PC-3 (cell line): ENCODE measurements at regions of chrX and their contacts with region 1.

Region 1: GRCh38 chrX:40735325-40736169 is at the start of gene MED14:
- DNase-seq: peak; percentile 84
- ATAC-seq: peak; percentile 78
- H3K4me3 ChIP-seq: peak within 1 kb of the TSS; percentile 92
- H3K27ac ChIP-seq: peak within 1 kb of the TSS; percentile 91
- H3K4me1 ChIP-seq: peaks cover 25% of the 10 kb centered on the region
- H3K27me3 ChIP-seq: no peaks in the 10 kb centered on the region
- CTCF ChIP-seq: peak; percentile 49; the same call in 1 of the 2 replicates
- total RNA-seq, gene MED14: 29.5 and 44.7 TPM in 2 replicates

Region 2: GRCh38 chrX:40773809-40774208 is 38.3 kb after region 1 on chrX:
- CTCF ChIA-PET with region 1: no interaction called
- POLR2A ChIA-PET with region 1: interaction called, 18 read pairs
- intact Hi-C with region 1: loop called (anchors 1 kb)
- DNase-seq: peak; percentile 81
- ATAC-seq: peak; percentile 86
- H3K4me3 ChIP-seq: peak overlapping the region; percentile 37
- H3K27ac ChIP-seq: peak overlapping the region; percentile 98
- H3K4me1 ChIP-seq: peaks cover 37% of the 10 kb centered on the region
- H3K27me3 ChIP-seq: no peaks in the 10 kb centered on the region
- CTCF ChIP-seq: no peak

Region 3: GRCh38 chrX:40784516-40785151 is 49.1 kb after region 1 on chrX:
- CTCF ChIA-PET with region 1: no interaction called
- POLR2A ChIA-PET with region 1: no interaction called
- intact Hi-C with region 1: loop called (anchors 1 kb)
- DNase-seq: peak; percentile 81
- ATAC-seq: peak; percentile 87
- H3K4me3 ChIP-seq: no peak overlapping the region
- H3K27ac ChIP-seq: peak overlapping the region; percentile 86
- H3K4me1 ChIP-seq: peaks cover 22% of the 10 kb centered on the region
- H3K27me3 ChIP-seq: no peaks in the 10 kb centered on the region
- CTCF ChIP-seq: no peak

Region 4: GRCh38 chrX:40792433-40792832 is 56.9 kb after region 1 on chrX:
- CTCF ChIA-PET with region 1: interaction called, 8 read pairs
- POLR2A ChIA-PET with region 1: no interaction called
- intact Hi-C with region 1: loop called (anchors 2 kb)
- DNase-seq: no peak
- ATAC-seq: no peak
- H3K4me3 ChIP-seq: no peak overlapping the region
- H3K27ac ChIP-seq: no peak overlapping the region
- H3K4me1 ChIP-seq: peaks cover 10% of the 10 kb centered on the region
- H3K27me3 ChIP-seq: no peaks in the 10 kb centered on the region
- CTCF ChIP-seq: no peak

Region 5: DNA sequence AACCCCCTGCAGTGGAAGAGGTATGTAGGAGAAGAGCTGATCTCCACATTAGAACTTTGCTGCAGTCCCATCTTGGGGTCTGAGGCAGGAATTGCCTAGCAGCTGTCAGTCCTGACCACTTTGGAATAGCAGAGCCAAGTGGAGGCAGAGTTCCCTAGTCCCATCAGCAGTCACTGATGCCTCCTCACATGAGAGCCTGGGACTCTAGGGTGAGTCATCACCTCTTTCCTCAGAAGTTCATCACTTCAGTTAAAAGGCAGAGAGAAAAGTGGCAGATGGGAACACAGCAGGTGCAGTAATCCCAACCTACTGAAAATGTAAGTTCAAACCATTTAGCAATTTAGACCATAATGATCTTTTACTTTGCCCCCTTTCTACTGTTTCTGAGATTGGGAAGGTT is 73.7 kb after region 1 on chrX:
- CTCF ChIA-PET with region 1: no interaction called
- POLR2A ChIA-PET with region 1: no interaction called
- intact Hi-C with region 1: no loop called
- DNase-seq: peak; percentile 14
- ATAC-seq: peak; percentile 45; the same call in 1 of the 2 replicates
- H3K4me3 ChIP-seq: no peak overlapping the region
- H3K27ac ChIP-seq: no peak overlapping the region
- H3K4me1 ChIP-seq: no peaks in the 10 kb centered on the region
- H3K27me3 ChIP-seq: no peaks in the 10 kb centered on the region
- CTCF ChIP-seq: no peak

Region 6: GRCh38 chrX:40922307-40922706 is 186.8 kb after region 1 on chrX:
- CTCF ChIA-PET with region 1: no interaction called
- POLR2A ChIA-PET with region 1: no interaction called
- intact Hi-C with region 1: loop called (anchors 1 kb)
- DNase-seq: peak; percentile 81
- ATAC-seq: peak; percentile 55
- H3K4me3 ChIP-seq: peak overlapping the region; percentile 35; the same call in 1 of the 2 replicates
- H3K27ac ChIP-seq: no peak overlapping the region
- H3K4me1 ChIP-seq: peaks cover 15% of the 10 kb centered on the region
- H3K27me3 ChIP-seq: no peaks in the 10 kb centered on the region
- CTCF ChIP-seq: peak; percentile 68